ENCODE measurements at regions of chr15 and their contacts with region 1.

Region 1: GRCh38 chr15:49731187-49732099 is 110.6 kb downstream of the DTWD1 start:
- DNase-seq: no peak
- H3K4me3 ChIP-seq: no peak overlapping the region
- H3K27ac ChIP-seq: no peak overlapping the region
- H3K4me1 ChIP-seq: no peaks in the 10 kb centered on the region
- H3K27me3 ChIP-seq: no peaks in the 10 kb centered on the region
- CTCF ChIP-seq: no peak
- POLR2A ChIP-seq: no peak

Region 2: GRCh38 chr15:49675041-49675440 is 56.4 kb before region 1 on chr15:
- intact Hi-C with region 1: loop called (anchors 10 kb)
- DNase-seq: no peak
- H3K4me3 ChIP-seq: no peak overlapping the region
- H3K27ac ChIP-seq: no peak overlapping the region
- H3K4me1 ChIP-seq: no peaks in the 10 kb centered on the region
- H3K27me3 ChIP-seq: no peaks in the 10 kb centered on the region
- CTCF ChIP-seq: no peak
- POLR2A ChIP-seq: no peak

Region 3: GRCh38 chr15:49927189-49927868 is 195.9 kb after region 1 on chr15:
- intact Hi-C with region 1: no loop called
- DNase-seq: no peak
- H3K4me3 ChIP-seq: no peak overlapping the region
- H3K27ac ChIP-seq: peak overlapping the region in 1 of 8 donors; percentile 7
- H3K4me1 ChIP-seq: no peaks in the 10 kb centered on the region
- H3K27me3 ChIP-seq: no peaks in the 10 kb centered on the region
- CTCF ChIP-seq: no peak
- POLR2A ChIP-seq: no peak

Measured in spleen (tissue), 13 donors.